ENCODE measurements at regions of chr12 and their contacts with region 1.

Region 1: GRCh38 chr12:79006306-79006705 is 141.7 kb downstream of the SYT1 start:
- DNase-seq: peak; percentile 43
- H3K4me3 ChIP-seq: no peak overlapping the region
- H3K27ac ChIP-seq: peak overlapping the region; percentile 4
- H3K4me1 ChIP-seq: peaks cover 50% of the 10 kb centered on the region
- H3K27me3 ChIP-seq: no peaks in the 10 kb centered on the region
- CTCF ChIP-seq: peak; percentile 59

Region 2: DNA sequence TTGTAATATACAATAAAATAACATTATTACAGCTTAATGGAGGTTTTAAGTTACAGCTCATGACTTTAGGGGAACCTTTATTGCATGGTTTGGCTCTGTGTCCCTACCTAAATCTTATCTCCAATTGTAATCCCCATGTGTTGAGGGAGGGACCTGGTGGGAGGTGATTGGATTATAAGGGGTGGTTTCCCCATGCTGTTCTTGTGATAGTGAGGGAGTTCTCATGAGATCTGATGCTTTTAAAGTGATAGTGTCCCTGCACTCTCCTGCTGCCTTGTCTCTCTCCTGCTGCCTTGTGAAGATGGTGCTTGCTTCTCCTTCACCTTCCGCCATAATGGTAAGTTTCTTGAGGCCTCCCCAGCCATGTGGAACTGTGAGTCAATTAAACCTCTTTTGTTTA is 273.8 kb before region 1 on chr12:
- CTCF ChIA-PET with region 1: no interaction called
- POLR2A ChIA-PET with region 1: no interaction called
- intact Hi-C with region 1: loop called (anchors 10 kb)
- DNase-seq: no peak
- H3K4me3 ChIP-seq: no peak overlapping the region
- H3K27ac ChIP-seq: no peak overlapping the region
- H3K4me1 ChIP-seq: peaks cover 34% of the 10 kb centered on the region
- H3K27me3 ChIP-seq: no peaks in the 10 kb centered on the region
- CTCF ChIP-seq: no peak

Region 3: GRCh38 chr12:78888568-78888967 is 117.7 kb before region 1 on chr12:
- CTCF ChIA-PET with region 1: no interaction called
- POLR2A ChIA-PET with region 1: no interaction called
- intact Hi-C with region 1: loop called (anchors 10 kb)
- DNase-seq: peak; percentile 93
- H3K4me3 ChIP-seq: peak overlapping the region; percentile 23
- H3K27ac ChIP-seq: peak overlapping the region; percentile 74
- H3K4me1 ChIP-seq: peaks cover 87% of the 10 kb centered on the region
- H3K27me3 ChIP-seq: no peaks in the 10 kb centered on the region
- CTCF ChIP-seq: no peak

Region 4: DNA sequence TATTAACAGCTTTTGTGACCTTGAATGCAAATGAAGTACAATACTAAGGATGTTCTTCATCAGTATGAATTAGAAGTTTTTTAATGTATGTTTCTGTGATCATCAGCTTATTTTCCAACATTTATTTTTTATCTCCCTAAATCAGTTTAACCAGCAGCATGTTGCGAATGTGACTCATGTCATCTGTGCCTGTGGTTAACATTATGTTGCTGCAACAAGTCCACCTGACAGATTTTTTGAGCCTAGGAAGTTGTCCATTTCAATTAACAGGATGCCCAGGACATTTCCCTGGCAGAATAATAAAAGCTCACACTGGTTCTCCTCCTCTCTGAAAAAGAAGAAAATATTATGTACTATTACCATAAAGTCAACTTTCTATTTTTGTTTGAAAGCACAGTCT is 13.8 kb after region 1 on chr12:
- CTCF ChIA-PET with region 1: no interaction called
- POLR2A ChIA-PET with region 1: no interaction called
- intact Hi-C with region 1: no loop called
- DNase-seq: no peak
- H3K4me3 ChIP-seq: no peak overlapping the region
- H3K27ac ChIP-seq: no peak overlapping the region
- H3K4me1 ChIP-seq: peaks cover 58% of the 10 kb centered on the region
- H3K27me3 ChIP-seq: no peaks in the 10 kb centered on the region
- CTCF ChIP-seq: no peak